ENCODE measurements at regions of chr11 and their contacts with region 1.

Region 1: DNA sequence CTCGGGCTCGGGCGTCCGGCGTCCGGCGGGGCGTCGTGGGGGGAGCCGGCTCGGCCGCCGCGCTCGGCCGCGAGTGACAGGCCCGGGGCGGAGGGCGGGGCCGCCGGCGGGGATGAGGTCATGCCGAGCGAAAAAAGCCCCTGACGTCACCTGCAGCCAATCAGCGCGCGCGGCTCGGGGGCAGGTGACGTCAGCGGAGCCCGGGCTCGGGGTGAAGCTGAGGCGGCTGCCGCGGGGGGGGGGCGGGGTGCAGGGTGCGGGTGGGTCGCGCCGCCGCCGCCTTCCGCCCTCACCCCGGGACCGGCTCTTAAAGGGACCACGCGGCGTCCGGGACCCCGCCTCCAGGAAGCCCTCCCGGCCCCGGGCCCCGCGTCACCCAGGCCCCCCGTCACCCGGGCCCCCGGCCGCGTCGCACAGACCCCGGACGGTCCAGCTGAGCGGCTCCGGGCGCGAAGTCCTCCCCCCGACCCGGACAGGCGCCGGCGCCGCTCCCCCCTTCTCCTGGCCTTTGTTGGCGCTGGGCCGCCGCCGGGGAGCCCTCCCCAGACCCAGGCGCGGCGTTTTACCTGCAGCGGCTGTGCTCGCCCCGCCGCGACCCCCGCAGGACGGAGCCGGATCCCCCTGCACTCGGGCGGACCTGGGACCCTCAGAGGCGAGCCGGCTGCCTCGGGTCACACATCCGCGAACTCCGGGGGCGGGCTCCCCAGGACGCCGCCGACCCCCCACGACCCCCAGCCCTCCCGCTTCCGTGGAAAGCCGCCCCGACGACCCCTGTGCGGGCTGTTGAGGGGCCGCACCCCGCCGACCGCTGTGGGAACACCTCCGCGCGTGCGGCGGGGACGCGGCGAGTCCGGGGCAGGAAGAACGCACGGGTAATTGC is at the start of gene DUSP8:
- DNase-seq: peak; percentile 53
- ATAC-seq: peak; percentile 69
- H3K4me3 ChIP-seq: peak within 1 kb of the TSS; percentile 65 to 70
- H3K27ac ChIP-seq: peak within 1 kb of the TSS; percentile 56; the same call in 1 of the 2 replicates
- H3K4me1 ChIP-seq: peaks cover 16 to 29% of the 10 kb centered on the region in 2 experiments; a peak in 3 of 4 replicates
- H3K27me3 ChIP-seq: no peaks in the 10 kb centered on the region
- CTCF ChIP-seq: no peak
- POLR2A ChIP-seq: no peak
- RAD21 ChIP-seq: no peak
- total RNA-seq, gene DUSP8: 10.2 TPM

Region 2: DNA sequence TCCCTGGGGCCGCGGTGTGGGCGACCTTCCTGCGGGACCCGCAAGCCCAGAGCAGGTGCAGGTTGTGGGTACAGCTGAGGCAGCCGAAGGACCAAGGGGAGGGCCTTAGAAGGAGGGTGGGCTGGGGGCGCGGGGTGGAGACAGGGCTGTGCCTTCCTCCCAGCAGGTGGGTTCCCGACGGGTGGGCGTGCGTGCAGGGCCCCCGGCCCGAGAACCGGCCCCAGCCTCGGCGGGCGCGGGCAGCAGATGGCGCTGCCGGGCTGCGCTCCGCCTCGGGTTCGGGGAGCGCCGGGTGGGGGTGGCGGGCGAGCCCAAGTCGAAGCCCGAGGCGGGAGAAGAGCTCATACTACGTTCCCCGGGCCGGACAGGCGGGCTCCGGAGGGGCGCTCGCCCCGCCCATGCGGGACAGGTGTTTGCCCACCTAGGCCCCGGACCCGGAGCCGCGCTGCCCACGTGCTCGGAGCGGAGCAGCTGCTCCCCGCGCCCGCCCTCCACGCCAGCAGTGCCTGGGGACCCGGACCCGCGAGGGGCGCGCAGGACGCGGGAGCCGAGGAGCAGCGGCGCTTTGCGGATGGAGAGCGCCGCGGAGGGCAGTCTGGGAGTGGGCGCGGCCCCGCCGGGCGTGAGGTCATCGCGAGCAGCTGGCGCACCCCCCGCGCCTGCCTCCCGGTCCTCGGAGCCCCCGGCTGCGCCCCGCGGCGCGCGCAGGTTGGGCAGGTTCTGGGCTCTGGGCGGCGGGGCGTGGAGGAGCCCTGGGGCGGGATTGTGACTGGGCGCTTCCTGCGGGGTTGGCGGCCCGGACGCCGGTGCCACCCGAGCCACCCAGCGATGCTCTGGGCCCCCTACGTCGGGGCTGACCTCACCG is 25.7 kb before region 1 on chr11:
- CTCF ChIA-PET with region 1: interaction called, 133 read pairs
- POLR2A ChIA-PET with region 1: interaction called, 18 read pairs
- RAD21 ChIA-PET with region 1: interaction called, 22 read pairs
- intact Hi-C with region 1: loop called (anchors 1 kb)
- DNase-seq: no peak
- ATAC-seq: peak; percentile 76
- H3K4me3 ChIP-seq: peak overlapping the region; percentile 50 to 62
- H3K27ac ChIP-seq: peak overlapping the region; percentile 88
- H3K4me1 ChIP-seq: peaks cover 17 to 37% of the 10 kb centered on the region in 2 experiments
- H3K27me3 ChIP-seq: no peaks in the 10 kb centered on the region
- CTCF ChIP-seq: peak in 2 of 3 experiments; percentile 69 to 80; a peak in 4 of 6 replicates
- POLR2A ChIP-seq: no peak
- RAD21 ChIP-seq: no peak

Region 3: GRCh38 chr11:1553808-1554594 is 18.4 kb before region 1 on chr11:
- CTCF ChIA-PET with region 1: interaction called, 133 read pairs
- POLR2A ChIA-PET with region 1: interaction called, 8 read pairs
- RAD21 ChIA-PET with region 1: interaction called, 3 to 4 read pairs
- intact Hi-C with region 1: loop called (anchors 2 kb)
- DNase-seq: no peak
- ATAC-seq: peak; percentile 98
- H3K4me3 ChIP-seq: peak overlapping the region in 1 of 2 experiments; percentile 23; a peak in 2 of 4 replicates
- H3K27ac ChIP-seq: peak overlapping the region; percentile 5; the same call in 1 of the 2 replicates
- H3K4me1 ChIP-seq: peaks cover 32 to 35% of the 10 kb centered on the region in 2 experiments
- H3K27me3 ChIP-seq: no peaks in the 10 kb centered on the region
- CTCF ChIP-seq: peak in 2 of 3 experiments; percentile 34 to 37; a peak in 3 of 6 replicates
- POLR2A ChIP-seq: no peak
- RAD21 ChIP-seq: no peak

Region 4: GRCh38 chr11:1559119-1559951 is 13.1 kb before region 1 on chr11:
- CTCF ChIA-PET with region 1: interaction called, 19 read pairs
- POLR2A ChIA-PET with region 1: interaction called, 8 read pairs
- RAD21 ChIA-PET with region 1: interaction called in 1 of 2 experiments, 4 read pairs
- intact Hi-C with region 1: loop called (anchors 2 kb)
- DNase-seq: no peak
- ATAC-seq: peak; percentile 14; the same call in 1 of the 2 replicates
- H3K4me3 ChIP-seq: no peak overlapping the region
- H3K27ac ChIP-seq: peak overlapping the region; percentile 75
- H3K4me1 ChIP-seq: peaks cover 33 to 37% of the 10 kb centered on the region in 2 experiments
- H3K27me3 ChIP-seq: no peaks in the 10 kb centered on the region
- CTCF ChIP-seq: no peak
- POLR2A ChIP-seq: no peak
- RAD21 ChIP-seq: no peak

Region 5: GRCh38 chr11:1598816-1599215 is 26.4 kb after region 1 on chr11:
- CTCF ChIA-PET with region 1: interaction called, 29 read pairs
- POLR2A ChIA-PET with region 1: interaction called, 3 read pairs
- RAD21 ChIA-PET with region 1: interaction called in 1 of 2 experiments, 3 read pairs
- intact Hi-C with region 1: no loop called
- DNase-seq: no peak
- ATAC-seq: no peak
- H3K4me3 ChIP-seq: no peak overlapping the region
- H3K27ac ChIP-seq: no peak overlapping the region
- H3K4me1 ChIP-seq: peaks cover 0 to 3% of the 10 kb centered on the region in 2 experiments; a peak in 1 of 4 replicates
- H3K27me3 ChIP-seq: peaks cover 19% of the 10 kb centered on the region; the same call in 1 of the 2 replicates
- CTCF ChIP-seq: no peak
- POLR2A ChIP-seq: no peak
- RAD21 ChIP-seq: no peak